A549 (cell line): ENCODE measurements at regions of chr10 and their contacts with region 1.

Region 1: GRCh38 chr10:104080762-104081161 is 4.9 kb downstream of the COL17A1 start:
- DNase-seq: peak; percentile 20 to 59
- ATAC-seq: peak in 1 of 2 experiments; percentile 56; a peak in 2 of 6 replicates
- H3K4me3 ChIP-seq: no peak overlapping the region
- H3K27ac ChIP-seq: no peak overlapping the region
- H3K4me1 ChIP-seq: peaks cover 8% of the 10 kb centered on the region; the same call in 2 of the 3 replicates
- CTCF ChIP-seq: peak; percentile 24; the same call in 2 of the 3 replicates
- EP300 ChIP-seq: no peak
- POLR2A ChIP-seq: no peak
- RAD21 ChIP-seq: peak; percentile 18 to 41; a peak in 2 of 5 replicates

Region 2: DNA sequence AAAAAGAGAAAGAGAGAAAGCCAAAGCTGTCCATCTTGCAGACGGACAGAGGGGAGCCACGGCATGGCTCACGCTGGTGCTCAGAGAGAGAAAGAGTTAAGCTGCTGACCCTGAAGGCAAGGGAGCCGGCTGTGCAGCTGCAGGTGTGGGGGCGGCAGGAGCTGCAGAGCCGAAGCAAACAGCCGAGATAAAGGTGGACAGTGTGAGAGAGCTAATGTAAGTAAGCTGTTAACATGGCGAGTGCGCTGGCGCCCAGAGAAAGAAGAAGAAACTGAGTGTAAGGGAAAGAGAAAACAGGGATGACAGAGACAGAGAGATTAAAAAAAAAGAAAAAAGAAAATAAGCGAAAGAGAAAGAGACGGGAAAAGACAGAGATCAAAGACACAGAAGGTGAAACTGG is 13.2 kb before region 1 on chr10:
- CTCF ChIA-PET with region 1: interaction called, 11 read pairs
- POLR2A ChIA-PET with region 1: no interaction called
- DNase-seq: no peak
- ATAC-seq: no peak
- H3K4me3 ChIP-seq: no peak overlapping the region
- H3K27ac ChIP-seq: no peak overlapping the region
- H3K4me1 ChIP-seq: no peaks in the 10 kb centered on the region
- CTCF ChIP-seq: no peak
- EP300 ChIP-seq: no peak
- POLR2A ChIP-seq: no peak
- RAD21 ChIP-seq: no peak

Region 3: DNA sequence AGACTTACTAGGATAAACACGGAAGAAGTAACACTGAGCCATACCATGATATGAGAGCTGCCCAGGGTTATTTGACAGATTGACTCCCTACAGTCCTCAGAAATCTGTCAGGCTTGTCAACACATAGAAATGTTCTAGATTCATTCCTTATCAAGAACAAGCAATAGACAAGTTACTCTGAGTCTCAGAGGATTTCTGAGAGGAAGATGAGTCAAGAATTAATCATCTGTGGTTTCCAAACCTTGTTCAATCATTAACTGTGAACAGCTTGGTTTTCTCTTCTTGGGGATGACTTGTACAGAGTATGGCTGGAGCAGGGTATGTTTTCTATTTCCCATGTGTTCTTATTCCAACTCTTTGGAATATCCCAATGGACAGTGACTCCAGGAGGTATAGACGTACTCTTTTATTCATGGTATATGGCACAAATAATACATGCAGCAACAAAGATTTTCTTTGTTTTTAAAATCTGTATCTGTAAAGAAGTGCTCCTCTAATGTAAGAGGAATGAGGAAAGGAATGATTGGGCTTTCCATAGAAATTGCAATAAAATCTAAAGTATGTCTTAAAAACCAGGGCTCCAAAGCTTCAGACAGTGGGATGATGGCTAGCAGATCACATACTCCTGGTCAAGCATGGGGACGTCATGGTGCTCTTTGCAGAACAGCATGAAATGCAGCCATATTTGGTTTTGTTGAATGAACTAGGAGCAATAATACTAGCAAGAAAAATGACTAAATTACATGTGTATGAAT is 29.3 kb after region 1 on chr10:
- CTCF ChIA-PET with region 1: interaction called, 11 read pairs
- POLR2A ChIA-PET with region 1: no interaction called
- DNase-seq: peak; percentile 62 to 92
- ATAC-seq: peak; percentile 98 to 99
- H3K4me3 ChIP-seq: no peak overlapping the region
- H3K27ac ChIP-seq: peak overlapping the region; percentile 89 to 93
- H3K4me1 ChIP-seq: peaks cover 33% of the 10 kb centered on the region
- CTCF ChIP-seq: no peak
- EP300 ChIP-seq: peak in 1 of 2 experiments; percentile 46; a peak in 2 of 5 replicates
- POLR2A ChIP-seq: no peak
- RAD21 ChIP-seq: 0 out of 5 replicates have a peak, but pooled peaks of 1 of the 2 experiments have one; percentile 35